ENCODE measurements at regions of chr2 and their contacts with region 1.

Region 1: DNA sequence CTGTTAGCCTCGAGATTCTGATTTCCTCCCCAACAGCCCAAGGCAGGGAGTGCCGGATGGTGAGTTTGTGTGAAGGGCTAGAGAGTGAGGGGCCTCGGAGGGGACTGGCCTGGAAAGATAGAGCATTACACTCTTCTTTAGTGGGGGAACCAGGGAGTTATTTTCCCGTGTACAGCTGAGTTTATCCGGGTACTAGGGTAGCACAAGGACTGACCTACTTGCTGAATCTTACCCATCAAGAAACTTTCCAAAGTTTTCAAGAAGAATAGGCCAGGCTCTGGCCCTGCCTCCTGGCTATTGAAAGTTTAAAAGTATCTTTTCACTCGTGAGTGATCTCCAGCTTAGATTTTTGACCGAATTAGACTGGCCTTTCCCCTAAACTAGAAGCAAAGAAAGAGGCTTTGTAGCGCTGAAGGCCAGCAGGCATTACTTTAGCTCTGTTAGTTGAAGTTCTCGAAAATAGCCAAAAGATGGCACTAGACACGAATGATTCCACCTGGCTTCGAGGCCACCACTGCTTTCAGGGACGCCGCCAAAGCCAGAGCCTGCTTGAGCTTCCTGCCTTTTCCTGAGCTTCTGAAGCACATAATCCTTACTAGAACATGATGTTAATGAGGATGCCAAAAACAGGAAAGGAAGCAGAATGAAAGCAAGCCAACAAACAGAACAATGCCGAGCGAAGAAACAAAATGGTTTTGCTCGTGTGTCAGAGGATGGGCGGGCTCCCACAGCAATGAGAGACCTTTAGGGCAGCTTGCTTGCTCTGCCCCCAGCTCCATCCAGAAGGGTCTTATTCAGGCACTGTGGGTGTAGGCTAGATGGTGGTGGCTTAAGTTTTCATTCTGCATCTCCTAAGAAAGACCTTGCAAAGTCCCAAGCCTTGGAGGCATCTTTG is 55.8 kb downstream of the TSN start:
- DNase-seq: peak; percentile 74
- H3K4me3 Mint-ChIP-seq: no peak overlapping the region
- H3K27ac Mint-ChIP-seq: no peak overlapping the region
- H3K4me1 Mint-ChIP-seq: peaks cover 5% of the 10 kb centered on the region
- H3K27me3 Mint-ChIP-seq: no peaks in the 10 kb centered on the region
- CTCF ChIP-seq: peak; percentile 66

Region 2: GRCh38 chr2:121677855-121678254 is 133.4 kb before region 1 on chr2:
- CTCF ChIA-PET with region 1: no interaction called
- POLR2A ChIA-PET with region 1: no interaction called
- intact Hi-C with region 1: no loop called
- DNase-seq: no peak
- H3K4me3 Mint-ChIP-seq: no peak overlapping the region
- H3K27ac Mint-ChIP-seq: no peak overlapping the region
- H3K4me1 Mint-ChIP-seq: no peaks in the 10 kb centered on the region
- H3K27me3 Mint-ChIP-seq: no peaks in the 10 kb centered on the region
- CTCF ChIP-seq: no peak

Region 3: GRCh38 chr2:121826036-121826435 is 14.8 kb after region 1 on chr2:
- CTCF ChIA-PET with region 1: interaction called, 13 read pairs
- POLR2A ChIA-PET with region 1: interaction called, 3 read pairs
- intact Hi-C with region 1: no loop called
- DNase-seq: no peak
- H3K4me3 Mint-ChIP-seq: no peak overlapping the region
- H3K27ac Mint-ChIP-seq: no peak overlapping the region
- H3K4me1 Mint-ChIP-seq: peaks cover 12% of the 10 kb centered on the region
- H3K27me3 Mint-ChIP-seq: no peaks in the 10 kb centered on the region
- CTCF ChIP-seq: no peak

Region 4: DNA sequence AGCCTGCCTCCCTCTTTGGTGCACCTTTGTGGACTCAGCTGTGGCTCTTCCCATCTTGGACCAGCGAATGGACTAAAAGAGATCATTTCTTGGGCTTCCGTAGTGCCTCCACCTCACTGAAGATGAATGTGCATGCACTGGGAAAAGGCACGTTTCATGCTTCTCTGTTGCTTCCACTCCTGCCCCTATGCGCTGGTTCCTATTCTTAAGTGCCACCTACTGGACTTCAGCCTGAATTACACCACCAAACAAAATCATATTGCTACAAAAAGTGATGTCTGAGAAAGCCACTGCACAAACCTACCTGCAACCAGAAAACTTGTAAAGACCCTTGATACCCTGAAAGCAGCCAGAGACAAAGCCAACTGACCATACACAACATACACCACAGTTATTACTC is 639.8 kb after region 1 on chr2:
- CTCF ChIA-PET with region 1: interaction called, 8 read pairs
- POLR2A ChIA-PET with region 1: no interaction called
- intact Hi-C with region 1: loop called (anchors 1 kb)
- DNase-seq: peak; percentile 66
- H3K4me3 Mint-ChIP-seq: no peak overlapping the region
- H3K27ac Mint-ChIP-seq: no peak overlapping the region
- H3K4me1 Mint-ChIP-seq: no peaks in the 10 kb centered on the region
- H3K27me3 Mint-ChIP-seq: no peaks in the 10 kb centered on the region
- CTCF ChIP-seq: peak; percentile 66